T-cell (primary cell): ENCODE measurements at regions of chr1 and their contacts with region 1.

Region 1: GRCh38 chr1:88655685-88656299 is 28.3 kb upstream of the PKN2 start:
- DNase-seq: peak in 1 of 35 experiments; percentile 65
- ATAC-seq: no peak
- H3K4me3 ChIP-seq: no peak overlapping the region
- H3K4me3 Mint-ChIP-seq: no peak overlapping the region
- H3K27ac ChIP-seq: no peak overlapping the region
- H3K27ac Mint-ChIP-seq: no peak overlapping the region
- H3K4me1 ChIP-seq: peaks cover 0 to 6% of the 10 kb centered on the region in 2 experiments
- H3K4me1 Mint-ChIP-seq: peaks cover 11 to 14% (median 12%) of the 10 kb centered on the region in 3 donors
- H3K27me3 ChIP-seq: no peaks in the 10 kb centered on the region
- H3K27me3 Mint-ChIP-seq: no peaks in the 10 kb centered on the region

Region 2: DNA sequence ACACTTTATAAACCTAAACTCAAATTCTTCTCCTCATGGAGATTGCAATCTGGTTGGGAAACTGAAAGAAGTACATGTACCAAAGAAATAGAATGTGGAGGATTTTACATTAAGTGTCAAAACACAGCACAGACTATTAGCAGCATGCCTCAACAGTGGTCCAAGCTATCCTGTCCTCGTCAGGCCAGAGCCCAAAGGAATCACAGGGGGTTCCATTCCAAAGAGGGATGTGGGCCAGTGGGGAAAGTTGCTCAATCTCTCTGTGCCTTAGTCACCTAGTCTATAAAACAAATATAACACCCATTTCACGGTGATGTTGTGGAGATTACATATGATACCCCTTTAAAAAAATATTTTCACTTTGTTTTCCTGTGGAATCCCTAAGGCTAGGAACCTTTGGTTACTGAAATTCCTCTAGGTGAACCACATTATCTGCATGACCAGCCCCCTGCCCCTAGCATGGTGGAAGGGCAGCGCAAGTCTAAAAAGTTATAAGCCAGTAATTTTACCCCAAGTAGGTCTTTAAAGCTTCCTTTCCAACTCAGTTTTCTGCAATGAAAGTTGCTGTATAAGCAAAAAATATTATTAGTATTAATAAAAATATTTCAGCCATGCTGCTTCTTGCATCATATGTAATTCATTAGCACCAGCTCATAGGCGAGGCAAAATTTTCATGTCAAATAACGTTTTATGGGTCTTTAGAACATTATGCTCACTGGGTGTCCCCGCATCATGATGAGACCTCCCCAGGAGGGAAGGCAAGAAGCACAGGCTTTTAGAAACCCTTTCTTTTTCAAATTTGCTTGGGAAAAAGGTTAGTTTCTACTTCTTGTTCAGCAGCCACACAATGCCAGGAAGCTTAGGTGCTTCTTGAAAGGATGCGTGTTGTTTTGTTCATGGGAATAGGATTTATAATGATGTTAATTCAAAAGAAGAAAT is 520.5 kb before region 1 on chr1:
- CTCF ChIA-PET with region 1: no interaction called
- POLR2A ChIA-PET with region 1: no interaction called
- DNase-seq: no peak
- ATAC-seq: no peak
- H3K4me3 ChIP-seq: no peak overlapping the region
- H3K4me3 Mint-ChIP-seq: no peak overlapping the region
- H3K27ac ChIP-seq: no peak overlapping the region
- H3K27ac Mint-ChIP-seq: no peak overlapping the region
- H3K4me1 ChIP-seq: no peaks in the 10 kb centered on the region
- H3K4me1 Mint-ChIP-seq: no peaks in the 10 kb centered on the region
- H3K27me3 ChIP-seq: no peaks in the 10 kb centered on the region
- H3K27me3 Mint-ChIP-seq: peaks cover 0 to 4% of the 10 kb centered on the region in 2 donors

Region 3: GRCh38 chr1:88780485-88780884 is 124.7 kb after region 1 on chr1:
- CTCF ChIA-PET with region 1: interaction called in 1 of 2 experiments, 4 read pairs
- POLR2A ChIA-PET with region 1: interaction called in 1 of 2 experiments, 10 read pairs
- DNase-seq: no peak
- ATAC-seq: no peak
- H3K4me3 ChIP-seq: no peak overlapping the region
- H3K4me3 Mint-ChIP-seq: no peak overlapping the region
- H3K27ac ChIP-seq: no peak overlapping the region
- H3K27ac Mint-ChIP-seq: no peak overlapping the region
- H3K4me1 ChIP-seq: no peaks in the 10 kb centered on the region
- H3K4me1 Mint-ChIP-seq: no peaks in the 10 kb centered on the region
- H3K27me3 ChIP-seq: no peaks in the 10 kb centered on the region
- H3K27me3 Mint-ChIP-seq: no peaks in the 10 kb centered on the region